GM13976 (cell line): ENCODE measurements at regions of chr5 and their contacts with region 1.

Region 1: GRCh38 chr5:50440651-50441492 is at the start of gene EMB:
- DNase-seq: peak; percentile 66
- CTCF ChIP-seq: peak; percentile 56

Region 2: DNA sequence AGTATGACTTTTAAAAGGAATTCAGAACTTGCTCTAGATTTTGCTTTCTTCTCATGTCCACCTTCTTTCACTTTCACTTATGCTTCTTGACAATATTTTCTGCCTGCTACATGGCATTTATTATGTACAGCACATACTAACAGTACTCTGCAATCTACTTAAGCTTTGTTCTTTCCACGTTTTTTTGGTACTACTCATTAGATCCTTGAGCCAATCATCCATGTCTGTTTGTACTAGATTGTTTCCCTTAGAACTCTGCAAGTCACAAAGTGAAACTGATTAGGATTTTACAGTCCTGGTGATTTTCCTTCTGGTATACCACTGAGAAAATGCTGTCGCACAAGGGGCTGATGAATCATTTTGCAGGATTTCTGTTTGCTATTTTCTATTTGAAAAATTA is 303.9 kb after region 1 on chr5:
- in situ Hi-C with region 1: loop called (anchors 25 kb)
- DNase-seq: peak; percentile 17
- CTCF ChIP-seq: no peak

Region 3: DNA sequence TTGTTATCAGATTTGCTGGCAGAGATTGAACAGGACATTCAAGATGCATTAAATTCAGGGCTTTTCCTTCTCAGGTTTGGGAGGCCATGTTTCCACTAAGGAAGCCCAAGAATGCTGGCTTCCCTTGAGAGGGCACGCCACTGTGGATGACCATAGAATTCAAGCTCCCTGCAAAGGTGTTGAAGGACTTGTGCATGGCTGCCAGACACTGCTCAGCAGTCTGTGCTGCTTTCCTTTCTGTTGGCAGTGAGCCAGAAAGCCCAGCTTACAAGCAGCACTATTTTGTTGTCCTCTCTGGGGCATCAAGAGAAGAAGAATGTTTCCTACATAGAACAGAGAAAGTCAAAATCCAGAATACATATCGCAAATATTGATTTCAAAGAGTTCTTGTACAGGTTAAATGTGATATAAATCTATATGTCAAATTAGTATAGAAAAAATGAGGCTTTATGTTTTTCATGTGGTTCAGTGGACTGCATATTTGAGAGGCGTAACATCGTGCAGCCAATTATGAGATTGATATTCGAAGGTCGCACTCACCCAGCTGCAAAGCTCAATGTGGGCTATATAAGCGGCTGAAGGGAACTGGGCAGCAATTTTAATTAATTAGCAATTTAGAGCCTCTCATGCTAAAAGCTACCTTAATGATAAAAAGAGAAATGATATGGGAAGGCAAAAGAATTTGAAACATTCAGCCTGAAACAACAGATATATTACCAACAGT is 839.3 kb after region 1 on chr5:
- in situ Hi-C with region 1: no loop called
- DNase-seq: no peak
- CTCF ChIP-seq: no peak